Caco-2 (cell line): ENCODE measurements at regions of chr3 and their contacts with region 1.

Region 1: GRCh38 chr3:50227390-50228183 is 8.4 kb upstream of the GNAI2 start:
- DNase-seq: peak; percentile 97
- H3K4me3 ChIP-seq: peak overlapping the region; percentile 72
- H3K4me3 Mint-ChIP-seq: peak overlapping the region; percentile 78
- H3K27ac Mint-ChIP-seq: peak overlapping the region; percentile 78
- H3K4me1 ChIP-seq: peaks cover 6% of the 10 kb centered on the region; the same call in 1 of the 2 replicates
- H3K4me1 Mint-ChIP-seq: no peaks in the 10 kb centered on the region
- H3K27me3 ChIP-seq: no peaks in the 10 kb centered on the region
- H3K27me3 Mint-ChIP-seq: no peaks in the 10 kb centered on the region
- CTCF ChIP-seq: peak; percentile 62 to 82

Region 2: DNA sequence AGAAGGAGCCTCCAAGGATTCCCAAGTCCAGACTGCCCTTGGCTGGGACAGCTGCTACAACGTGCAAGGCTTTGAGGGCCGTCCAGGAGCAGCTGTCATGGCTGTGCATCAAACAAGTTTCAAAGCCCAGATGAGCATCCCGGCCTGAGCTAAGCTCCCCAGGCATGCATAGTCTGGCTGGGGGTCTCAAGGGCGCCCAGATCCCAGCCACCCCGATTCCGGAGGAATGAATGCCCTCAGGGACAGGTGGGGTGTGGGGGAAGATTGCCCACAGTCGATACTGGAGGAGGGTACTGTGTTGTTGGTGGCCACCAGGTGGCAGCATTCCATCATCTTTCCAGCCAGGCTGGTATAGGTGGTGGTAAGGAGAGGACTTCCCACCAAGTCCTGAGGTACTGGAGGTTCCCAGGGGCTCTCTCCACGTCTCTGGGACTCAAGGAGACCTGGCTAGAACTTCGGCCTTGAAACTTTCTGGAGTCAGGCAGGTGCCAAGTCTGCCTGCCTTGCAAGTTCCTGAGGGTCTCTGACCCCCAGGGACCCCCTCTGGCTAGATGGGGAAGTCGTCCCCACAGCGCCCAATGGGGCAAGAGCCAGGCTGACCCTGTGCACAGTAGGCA is 106.1 kb before region 1 on chr3:
- CTCF ChIA-PET with region 1: interaction called, 3 read pairs
- POLR2A ChIA-PET with region 1: no interaction called
- intact Hi-C with region 1: loop called (anchors 1 kb)
- DNase-seq: peak; percentile 84 to 85
- H3K4me3 ChIP-seq: no peak overlapping the region
- H3K4me3 Mint-ChIP-seq: no peak overlapping the region
- H3K27ac Mint-ChIP-seq: no peak overlapping the region
- H3K4me1 ChIP-seq: peaks cover 32% of the 10 kb centered on the region
- H3K4me1 Mint-ChIP-seq: peaks cover 24% of the 10 kb centered on the region
- H3K27me3 ChIP-seq: no peaks in the 10 kb centered on the region
- H3K27me3 Mint-ChIP-seq: no peaks in the 10 kb centered on the region
- CTCF ChIP-seq: peak; percentile 84 to 87

Region 3: DNA sequence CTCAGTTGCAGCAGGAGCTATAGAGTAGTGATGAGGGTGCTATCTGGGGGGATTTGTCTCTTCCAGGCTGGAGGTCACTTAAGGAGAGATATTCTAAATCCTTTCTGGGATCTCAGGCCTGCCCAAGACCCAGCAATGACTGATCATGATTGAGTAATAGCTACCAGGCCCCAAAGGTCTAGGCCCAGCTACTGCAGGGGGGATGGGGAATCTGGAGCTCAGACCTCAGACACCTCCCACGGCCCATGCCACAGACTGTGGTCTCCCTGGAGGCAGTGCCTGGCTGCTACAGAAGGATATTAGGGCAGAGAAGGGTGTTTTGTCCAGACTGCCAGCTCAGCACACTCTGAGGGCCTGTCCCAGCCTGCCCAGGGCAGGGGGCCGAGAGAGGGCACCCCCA is 15.7 kb before region 1 on chr3:
- CTCF ChIA-PET with region 1: interaction called, 23 read pairs
- POLR2A ChIA-PET with region 1: no interaction called
- intact Hi-C with region 1: no loop called
- DNase-seq: no peak
- H3K4me3 ChIP-seq: no peak overlapping the region
- H3K4me3 Mint-ChIP-seq: no peak overlapping the region
- H3K27ac Mint-ChIP-seq: no peak overlapping the region
- H3K4me1 ChIP-seq: peaks cover 22% of the 10 kb centered on the region
- H3K4me1 Mint-ChIP-seq: peaks cover 12% of the 10 kb centered on the region
- H3K27me3 ChIP-seq: no peaks in the 10 kb centered on the region
- H3K27me3 Mint-ChIP-seq: no peaks in the 10 kb centered on the region
- CTCF ChIP-seq: no peak

Region 4: GRCh38 chr3:50245831-50246516 is 18.4 kb after region 1 on chr3:
- CTCF ChIA-PET with region 1: interaction called, 8 read pairs
- POLR2A ChIA-PET with region 1: no interaction called
- intact Hi-C with region 1: loop called (anchors 1 kb)
- DNase-seq: peak; percentile 81 to 90
- H3K4me3 ChIP-seq: no peak overlapping the region
- H3K4me3 Mint-ChIP-seq: no peak overlapping the region
- H3K27ac Mint-ChIP-seq: peak overlapping the region; percentile 55
- H3K4me1 ChIP-seq: peaks cover 8% of the 10 kb centered on the region
- H3K4me1 Mint-ChIP-seq: no peaks in the 10 kb centered on the region
- H3K27me3 ChIP-seq: no peaks in the 10 kb centered on the region
- H3K27me3 Mint-ChIP-seq: no peaks in the 10 kb centered on the region
- CTCF ChIP-seq: peak; percentile 87 to 97

Region 5: DNA sequence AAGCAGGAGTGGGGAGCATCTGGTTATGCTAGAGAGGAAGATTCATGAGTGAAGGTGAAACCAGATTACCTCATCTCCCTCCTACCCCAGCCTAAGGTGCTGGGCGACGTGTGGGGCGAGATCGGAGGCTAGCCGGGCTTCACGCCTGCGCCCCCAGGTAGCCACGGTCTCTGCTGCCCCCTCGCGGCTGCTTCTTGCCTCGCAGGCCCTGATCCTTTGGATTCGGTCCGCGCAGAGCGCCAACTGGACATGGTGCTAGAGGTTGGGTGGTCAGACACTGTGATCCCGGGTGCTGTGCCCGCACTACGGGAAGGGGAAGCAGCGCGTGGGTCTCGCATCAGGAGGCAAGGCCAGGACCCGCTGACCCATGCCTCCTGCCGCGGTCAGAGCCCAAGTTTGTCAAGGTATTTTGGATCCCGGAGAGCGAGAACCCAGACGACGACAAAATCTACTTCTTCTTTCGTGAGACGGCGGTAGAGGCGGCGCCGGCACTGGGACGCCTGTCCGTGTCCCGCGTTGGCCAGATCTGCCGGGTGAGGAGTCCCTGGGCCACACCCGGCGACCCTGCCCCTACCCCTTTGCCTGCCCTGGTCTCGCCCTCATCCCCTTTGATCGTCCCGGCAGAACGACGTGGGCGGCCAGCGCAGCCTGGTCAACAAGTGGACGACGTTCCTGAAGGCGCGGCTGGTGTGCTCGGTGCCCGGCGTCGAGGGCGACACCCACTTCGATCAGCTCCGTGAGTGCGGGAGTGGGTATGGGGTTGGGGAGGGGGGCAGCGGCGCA is 45.5 kb after region 1 on chr3:
- CTCF ChIA-PET with region 1: interaction called, 5 read pairs
- POLR2A ChIA-PET with region 1: interaction called, 3 read pairs
- intact Hi-C with region 1: loop called (anchors 1 kb)
- DNase-seq: peak; percentile 80 to 92
- H3K4me3 ChIP-seq: no peak overlapping the region
- H3K4me3 Mint-ChIP-seq: no peak overlapping the region
- H3K27ac Mint-ChIP-seq: peak overlapping the region; percentile 45
- H3K4me1 ChIP-seq: peaks cover 55% of the 10 kb centered on the region
- H3K4me1 Mint-ChIP-seq: peaks cover 33% of the 10 kb centered on the region
- H3K27me3 ChIP-seq: no peaks in the 10 kb centered on the region
- H3K27me3 Mint-ChIP-seq: no peaks in the 10 kb centered on the region
- CTCF ChIP-seq: peak; percentile 92 to 97